ENCODE measurements at regions of chr2 and their contacts with region 1.

Region 1: DNA sequence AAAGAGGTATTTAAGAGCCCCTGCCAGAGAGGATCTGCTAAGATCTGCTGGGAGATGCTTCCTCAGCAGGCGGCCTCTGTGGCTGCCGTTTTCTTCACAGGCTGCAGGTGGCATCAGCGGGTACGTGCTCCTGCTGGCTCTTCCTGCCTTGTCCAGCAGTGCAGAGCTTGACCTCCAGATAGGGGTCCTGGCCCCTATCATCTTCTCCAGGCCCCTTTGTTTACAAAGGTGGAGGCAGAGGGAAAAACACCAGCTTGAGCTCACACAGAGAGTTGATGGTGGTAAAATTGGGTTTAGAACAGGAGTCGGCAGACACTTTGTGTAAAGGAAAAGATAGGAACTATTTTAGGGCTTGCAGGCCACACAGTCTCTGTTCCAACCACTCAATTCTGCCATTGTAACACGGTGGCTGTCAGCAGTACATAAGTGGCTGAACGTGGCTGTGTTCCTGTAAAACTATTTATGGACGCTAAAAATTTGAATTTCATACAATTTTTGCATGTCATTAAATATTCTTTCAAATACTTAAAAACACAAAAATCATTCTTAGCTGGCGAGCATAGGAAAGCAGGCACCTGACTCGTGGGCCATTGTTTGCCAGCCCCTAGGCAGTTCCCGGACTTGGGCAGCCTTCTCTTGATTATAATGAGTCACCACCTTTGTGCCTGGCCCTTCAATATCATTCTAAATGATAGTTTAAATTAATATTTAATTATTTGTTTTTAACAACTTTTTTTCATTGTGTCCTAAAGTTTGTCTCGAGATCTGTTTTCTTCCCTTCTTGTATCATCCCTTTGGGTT is 98.2 kb upstream of the B3GNT7 start:
- DNase-seq: peak; percentile 85
- CTCF ChIP-seq: peak; percentile 86

Region 2: GRCh38 chr2:231276987-231277386 is 20.3 kb before region 1 on chr2:
- CTCF ChIA-PET with region 1: interaction called, 16 read pairs
- POLR2A ChIA-PET with region 1: no interaction called
- DNase-seq: no peak
- CTCF ChIP-seq: no peak

Region 3: DNA sequence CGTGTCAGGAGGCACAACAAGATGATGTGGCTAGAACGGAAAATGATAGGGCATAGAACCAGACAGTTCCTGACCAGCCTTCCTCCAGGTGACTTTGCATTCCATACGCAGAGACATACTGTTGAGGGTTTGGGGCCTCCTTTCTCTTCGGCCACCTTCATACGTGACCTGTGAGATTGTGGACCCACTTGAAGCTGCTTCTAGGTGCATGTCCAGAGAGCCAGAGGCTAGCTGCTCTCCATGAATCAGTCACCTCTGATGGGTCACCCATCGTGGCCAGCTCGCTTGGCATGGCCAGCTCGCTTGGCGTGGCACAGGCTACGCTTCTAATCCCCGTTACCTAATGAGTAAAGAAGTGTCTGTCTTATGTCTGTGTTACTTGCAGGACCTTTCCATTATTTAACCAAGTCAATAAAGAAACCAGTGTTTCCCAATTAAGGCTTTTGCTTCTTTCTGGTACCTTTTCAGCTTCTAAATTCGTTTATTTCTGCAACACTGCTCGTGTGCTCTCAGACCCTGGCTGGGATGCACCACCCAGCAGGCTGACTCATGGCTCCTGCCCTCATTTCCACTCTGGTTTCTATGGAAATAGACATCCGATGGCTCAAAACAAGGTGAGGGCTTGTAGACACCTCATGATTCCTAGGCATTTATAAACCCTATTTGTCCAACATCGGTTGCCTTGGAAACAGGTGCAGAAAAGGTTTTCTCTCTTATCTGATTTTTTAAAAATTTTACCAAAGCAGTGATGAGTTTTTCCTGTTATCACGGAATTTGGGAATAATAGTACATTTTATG is 11.5 kb after region 1 on chr2:
- CTCF ChIA-PET with region 1: interaction called, 12 read pairs
- POLR2A ChIA-PET with region 1: no interaction called
- DNase-seq: no peak
- CTCF ChIP-seq: no peak

Region 4: GRCh38 chr2:231334179-231334930 is 37.0 kb after region 1 on chr2:
- CTCF ChIA-PET with region 1: interaction called, 13 read pairs
- POLR2A ChIA-PET with region 1: no interaction called
- DNase-seq: no peak
- CTCF ChIP-seq: no peak